ENCODE measurements at regions of chr2 and their contacts with region 1.

Region 1: GRCh38 chr2:37506407-37507050 is 162.1 kb downstream of the QPCT start:
- DNase-seq: no peak
- ATAC-seq: no peak
- H3K4me3 ChIP-seq: no peak overlapping the region
- H3K4me3 Mint-ChIP-seq: no peak overlapping the region
- H3K27ac ChIP-seq: no peak overlapping the region
- H3K27ac Mint-ChIP-seq: no peak overlapping the region
- H3K4me1 ChIP-seq: no peaks in the 10 kb centered on the region
- H3K4me1 Mint-ChIP-seq: no peaks in the 10 kb centered on the region
- H3K27me3 ChIP-seq: no peaks in the 10 kb centered on the region
- H3K27me3 Mint-ChIP-seq: peaks cover 6 to 11% of the 10 kb centered on the region in 2 donors

Region 2: GRCh38 chr2:37068686-37069085 is 437.8 kb before region 1 on chr2:
- CTCF ChIA-PET with region 1: no interaction called
- POLR2A ChIA-PET with region 1: no interaction called
- DNase-seq: no peak
- ATAC-seq: no peak
- H3K4me3 ChIP-seq: no peak overlapping the region
- H3K4me3 Mint-ChIP-seq: no peak overlapping the region
- H3K27ac ChIP-seq: no peak overlapping the region
- H3K27ac Mint-ChIP-seq: no peak overlapping the region
- H3K4me1 ChIP-seq: no peaks in the 10 kb centered on the region
- H3K4me1 Mint-ChIP-seq: peaks cover 15 to 22% (median 17%) of the 10 kb centered on the region in 3 donors
- H3K27me3 ChIP-seq: no peaks in the 10 kb centered on the region
- H3K27me3 Mint-ChIP-seq: no peaks in the 10 kb centered on the region

Region 3: GRCh38 chr2:37456479-37456878 is 50.0 kb before region 1 on chr2:
- CTCF ChIA-PET with region 1: no interaction called
- POLR2A ChIA-PET with region 1: no interaction called
- DNase-seq: peak; percentile 16 to 65 (median 39)
- ATAC-seq: peak; percentile 91 to 96 (median 94)
- H3K4me3 ChIP-seq: no peak overlapping the region
- H3K4me3 Mint-ChIP-seq: peak overlapping the region; percentile 22 to 78 (median 34)
- H3K27ac ChIP-seq: peak overlapping the region; percentile 59
- H3K27ac Mint-ChIP-seq: peak overlapping the region; percentile 97
- H3K4me1 ChIP-seq: peaks cover 21 to 48% of the 10 kb centered on the region in 2 experiments
- H3K4me1 Mint-ChIP-seq: peaks cover 73 to 80% (median 77%) of the 10 kb centered on the region in 3 donors
- H3K27me3 ChIP-seq: no peaks in the 10 kb centered on the region
- H3K27me3 Mint-ChIP-seq: no peaks in the 10 kb centered on the region

Region 4: DNA sequence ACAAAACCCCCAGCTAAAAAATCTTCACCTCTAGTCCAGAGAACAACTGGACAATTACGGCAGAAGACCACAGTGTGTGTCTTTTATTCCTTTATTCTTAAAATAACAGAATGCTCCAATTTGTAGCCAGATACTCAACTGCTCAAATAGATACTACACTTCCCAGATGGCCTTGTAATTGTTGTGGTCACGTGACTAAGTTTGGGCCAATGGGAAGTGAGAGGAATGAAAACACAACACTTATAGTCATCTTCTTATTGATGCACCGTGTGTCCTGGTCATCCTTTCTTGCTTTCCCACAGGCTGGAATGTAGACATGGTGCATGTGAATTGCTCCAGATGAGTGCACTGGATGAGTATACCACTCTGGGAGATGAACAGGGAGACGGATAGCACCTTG is 19.8 kb after region 1 on chr2:
- CTCF ChIA-PET with region 1: no interaction called
- POLR2A ChIA-PET with region 1: interaction called in 1 of 2 experiments, 10 read pairs
- DNase-seq: no peak
- ATAC-seq: no peak
- H3K4me3 ChIP-seq: no peak overlapping the region
- H3K4me3 Mint-ChIP-seq: no peak overlapping the region
- H3K27ac ChIP-seq: no peak overlapping the region
- H3K27ac Mint-ChIP-seq: no peak overlapping the region
- H3K4me1 ChIP-seq: no peaks in the 10 kb centered on the region
- H3K4me1 Mint-ChIP-seq: no peaks in the 10 kb centered on the region
- H3K27me3 ChIP-seq: no peaks in the 10 kb centered on the region
- H3K27me3 Mint-ChIP-seq: no peaks in the 10 kb centered on the region

Region 5: GRCh38 chr2:37544591-37545031 is 38.1 kb after region 1 on chr2:
- CTCF ChIA-PET with region 1: no interaction called
- POLR2A ChIA-PET with region 1: no interaction called
- DNase-seq: no peak
- ATAC-seq: no peak
- H3K4me3 ChIP-seq: no peak overlapping the region
- H3K4me3 Mint-ChIP-seq: no peak overlapping the region
- H3K27ac ChIP-seq: no peak overlapping the region
- H3K27ac Mint-ChIP-seq: no peak overlapping the region
- H3K4me1 ChIP-seq: no peaks in the 10 kb centered on the region
- H3K4me1 Mint-ChIP-seq: peaks cover 0 to 3% (median 0%) of the 10 kb centered on the region in 3 donors
- H3K27me3 ChIP-seq: no peaks in the 10 kb centered on the region
- H3K27me3 Mint-ChIP-seq: peaks cover 0 to 3% of the 10 kb centered on the region in 2 donors

Measured in T-cell (primary cell).